ENCODE measurements at regions of chr4 and their contacts with region 1.

Region 1: GRCh38 chr4:99383833-99384392 is 31.4 kb upstream of the ADH1C start:
- DNase-seq: no peak
- ATAC-seq: no peak

Region 2: GRCh38 chr4:99300934-99301333 is 83.0 kb before region 1 on chr4:
- intact Hi-C with region 1: no loop called
- DNase-seq: peak; percentile 66 to 77
- ATAC-seq: peak; percentile 25

Region 3: DNA sequence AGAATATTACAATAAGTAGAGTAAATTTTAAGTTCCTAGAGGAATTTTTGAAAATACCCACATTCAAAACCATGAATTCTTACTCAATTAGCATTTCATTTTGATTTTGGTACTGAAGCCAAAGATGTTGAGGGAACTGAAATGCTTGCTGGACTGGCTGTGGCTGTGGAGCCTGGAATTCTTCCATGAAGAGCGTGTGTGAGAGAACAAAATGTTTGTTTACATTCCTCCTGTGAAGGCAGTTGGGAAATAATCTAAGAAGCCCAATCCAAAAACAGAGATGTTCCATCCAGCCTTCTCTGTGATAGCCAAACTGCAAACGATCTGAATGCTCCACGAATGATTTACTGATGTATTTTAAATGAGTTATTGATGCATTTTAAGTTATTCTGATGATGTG is 58.9 kb before region 1 on chr4:
- intact Hi-C with region 1: loop called in 1 of 2 experiments (anchors 10 kb)
- DNase-seq: peak in 1 of 2 donors; percentile 71
- ATAC-seq: no peak